ENCODE measurements at regions of chr1 and their contacts with region 1.

Region 1: DNA sequence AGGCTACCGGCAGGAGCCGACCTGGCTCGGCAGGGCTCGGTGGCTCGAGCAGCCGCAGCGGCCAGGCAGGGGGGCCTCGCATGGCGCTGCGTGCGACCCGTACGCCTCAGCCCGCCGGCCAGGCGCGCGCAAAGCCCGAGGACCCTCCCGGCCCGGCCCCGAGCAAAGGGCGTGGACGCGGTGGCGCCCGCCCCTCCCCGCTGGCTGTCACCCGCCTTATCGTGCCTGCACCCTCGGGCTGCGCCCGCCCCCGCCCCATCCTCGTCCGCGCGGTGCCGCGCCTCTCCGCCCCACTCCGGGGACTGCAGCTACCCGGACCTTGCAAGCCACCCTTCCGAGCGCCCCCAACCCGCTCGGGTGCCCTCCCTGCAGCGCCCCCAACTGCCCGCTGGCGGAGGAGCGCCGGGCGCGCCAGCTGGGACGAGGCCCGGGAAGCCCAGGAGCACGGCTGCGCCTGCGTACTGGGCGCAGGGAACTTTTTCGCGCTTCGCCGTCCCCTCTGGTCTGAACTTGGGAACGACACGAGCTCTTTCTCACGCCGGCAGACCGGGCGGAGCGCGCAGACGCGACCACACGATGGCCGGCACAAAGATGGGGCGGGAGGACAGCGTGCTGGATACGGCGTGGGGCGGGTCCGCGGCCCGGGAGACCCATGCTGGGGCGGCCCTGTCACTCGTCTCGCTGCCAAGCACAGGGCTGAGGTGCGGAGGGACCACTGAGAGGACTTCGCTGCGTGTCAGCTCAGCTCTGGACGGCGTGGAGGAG is at the start of gene ABCB10:
- DNase-seq: peak; percentile 88
- ATAC-seq: peak; percentile 85
- H3K4me3 Mint-ChIP-seq: peak within 1 kb of the TSS; percentile 91
- H3K27ac Mint-ChIP-seq: peak within 1 kb of the TSS; percentile 94
- H3K4me1 Mint-ChIP-seq: peaks cover 44% of the 10 kb centered on the region
- H3K27me3 Mint-ChIP-seq: no peaks in the 10 kb centered on the region
- total RNA-seq, gene ABCB10: 32.4 to 39.9 TPM

Region 2: GRCh38 chr1:229507951-229508822 is 50.6 kb before region 1 on chr1 and contains the start of gene NUP133:
- CTCF ChIA-PET with region 1: interaction called, 9 read pairs
- POLR2A ChIA-PET with region 1: interaction called, 14 read pairs
- DNase-seq: peak; percentile 99
- ATAC-seq: peak; percentile 95
- H3K4me3 Mint-ChIP-seq: peak within 1 kb of the TSS; percentile 87
- H3K27ac Mint-ChIP-seq: peak within 1 kb of the TSS; percentile 96
- H3K4me1 Mint-ChIP-seq: peaks cover 36% of the 10 kb centered on the region
- H3K27me3 Mint-ChIP-seq: peaks cover 2% of the 10 kb centered on the region
- total RNA-seq, gene NUP133: 46.8 to 49.7 TPM

Region 3: GRCh38 chr1:229625915-229626831 is 67.4 kb after region 1 on chr1 and contains the starts of genes TAF5L and URB2:
- CTCF ChIA-PET with region 1: interaction called, 10 read pairs
- POLR2A ChIA-PET with region 1: interaction called, 22 read pairs
- DNase-seq: peak; percentile 87
- ATAC-seq: peak; percentile 93
- H3K4me3 Mint-ChIP-seq: peak within 1 kb of the TSS; percentile 98
- H3K27ac Mint-ChIP-seq: peak within 1 kb of the TSS; percentile 98
- H3K4me1 Mint-ChIP-seq: peaks cover 52% of the 10 kb centered on the region
- H3K27me3 Mint-ChIP-seq: no peaks in the 10 kb centered on the region
- total RNA-seq, gene TAF5L: 30.2 to 30.7 TPM
- total RNA-seq, gene URB2: 17.2 to 17.5 TPM